ENCODE measurements at regions of chr2 and their contacts with region 1.

Region 1: GRCh38 chr2:110720547-110720946 is 11.8 kb upstream of the ACOXL start:
- DNase-seq: no peak
- ATAC-seq: no peak
- H3K4me3 ChIP-seq: no peak overlapping the region
- H3K4me3 Mint-ChIP-seq: no peak overlapping the region
- H3K27ac ChIP-seq: no peak overlapping the region
- H3K27ac Mint-ChIP-seq: no peak overlapping the region
- H3K4me1 ChIP-seq: no peaks in the 10 kb centered on the region
- H3K4me1 Mint-ChIP-seq: no peaks in the 10 kb centered on the region
- H3K27me3 ChIP-seq: no peaks in the 10 kb centered on the region
- H3K27me3 Mint-ChIP-seq: peaks cover 20% of the 10 kb centered on the region
- CTCF ChIP-seq: no peak

Region 2: GRCh38 chr2:110639972-110640371 is 80.6 kb before region 1 on chr2:
- CTCF ChIA-PET with region 1: no interaction called
- POLR2A ChIA-PET with region 1: no interaction called
- intact Hi-C with region 1: no loop called
- DNase-seq: no peak
- ATAC-seq: no peak
- H3K4me3 ChIP-seq: no peak overlapping the region
- H3K4me3 Mint-ChIP-seq: no peak overlapping the region
- H3K27ac ChIP-seq: no peak overlapping the region
- H3K27ac Mint-ChIP-seq: peak overlapping the region; percentile 28
- H3K4me1 ChIP-seq: no peaks in the 10 kb centered on the region
- H3K4me1 Mint-ChIP-seq: no peaks in the 10 kb centered on the region
- H3K27me3 ChIP-seq: no peaks in the 10 kb centered on the region
- H3K27me3 Mint-ChIP-seq: no peaks in the 10 kb centered on the region
- CTCF ChIP-seq: no peak

Region 3: GRCh38 chr2:110732422-110733413 is 12.2 kb after region 1 on chr2 and contains the start of gene ACOXL:
- CTCF ChIA-PET with region 1: no interaction called
- POLR2A ChIA-PET with region 1: interaction called, 3 read pairs
- intact Hi-C with region 1: loop called in 1 of 2 experiments (anchors 1 kb)
- DNase-seq: peak in 3 of 9 experiments; percentile 22 to 23 (median 23)
- ATAC-seq: peak; percentile 31
- H3K4me3 ChIP-seq: peak within 1 kb of the TSS in 1 of 2 experiments; percentile 41
- H3K4me3 Mint-ChIP-seq: peak within 1 kb of the TSS; percentile 64
- H3K27ac ChIP-seq: no peak within 1 kb of the TSS
- H3K27ac Mint-ChIP-seq: no peak within 1 kb of the TSS
- H3K4me1 ChIP-seq: peaks cover 7% of the 10 kb centered on the region
- H3K4me1 Mint-ChIP-seq: peaks cover 14% of the 10 kb centered on the region
- H3K27me3 ChIP-seq: peaks cover 20% of the 10 kb centered on the region in 2 experiments
- H3K27me3 Mint-ChIP-seq: peaks cover 65% of the 10 kb centered on the region
- CTCF ChIP-seq: no peak
- total RNA-seq, gene ACOXL: not detected